Activated CD4-positive, alpha-beta memory T cell treated with anti-CD3 and anti-CD28 coated beads for 36 hours (primary cell): ENCODE measurements at regions of chr3 and their contacts with region 1.

Region 1: GRCh38 chr3:114290911-114291901 is 2.6 kb upstream of the TIGIT start:
- DNase-seq: peak; percentile 96
- H3K4me3 Mint-ChIP-seq: peak overlapping the region; percentile 75
- H3K27ac Mint-ChIP-seq: peak overlapping the region; percentile 97
- H3K4me1 Mint-ChIP-seq: peaks cover 59% of the 10 kb centered on the region
- H3K27me3 Mint-ChIP-seq: no peaks in the 10 kb centered on the region

Region 2: GRCh38 chr3:114223143-114223542 is 68.1 kb before region 1 on chr3:
- CTCF ChIA-PET with region 1: interaction called, 38 read pairs
- POLR2A ChIA-PET with region 1: interaction called, 16 read pairs
- intact Hi-C with region 1: loop called (anchors 1 kb)
- DNase-seq: no peak
- H3K4me3 Mint-ChIP-seq: no peak overlapping the region
- H3K27ac Mint-ChIP-seq: peak overlapping the region; percentile 92
- H3K4me1 Mint-ChIP-seq: peaks cover 90% of the 10 kb centered on the region
- H3K27me3 Mint-ChIP-seq: no peaks in the 10 kb centered on the region

Region 3: GRCh38 chr3:114260152-114260551 is 31.1 kb before region 1 on chr3:
- CTCF ChIA-PET with region 1: interaction called, 11 read pairs
- POLR2A ChIA-PET with region 1: no interaction called
- intact Hi-C with region 1: no loop called
- DNase-seq: no peak
- H3K4me3 Mint-ChIP-seq: no peak overlapping the region
- H3K27ac Mint-ChIP-seq: no peak overlapping the region
- H3K4me1 Mint-ChIP-seq: no peaks in the 10 kb centered on the region
- H3K27me3 Mint-ChIP-seq: no peaks in the 10 kb centered on the region

Region 4: DNA sequence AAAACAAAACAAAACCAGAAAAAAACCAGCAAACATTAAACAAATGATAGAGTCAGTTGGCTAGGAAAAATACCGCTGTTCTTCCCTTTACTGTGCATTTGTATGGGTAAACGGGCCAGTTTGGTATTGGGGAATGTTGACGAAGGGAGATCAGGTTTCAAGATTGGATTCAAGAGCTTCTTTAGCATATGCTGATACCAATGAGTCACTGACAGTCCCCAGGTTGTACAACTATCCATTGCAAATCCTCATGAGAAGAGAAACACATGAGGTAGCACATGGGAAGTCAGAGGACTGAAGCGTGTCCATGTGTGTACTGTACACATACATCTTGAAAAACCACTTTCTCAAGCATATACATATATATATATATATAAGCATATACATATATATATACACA is 28.2 kb after region 1 on chr3:
- CTCF ChIA-PET with region 1: interaction called, 28 read pairs
- POLR2A ChIA-PET with region 1: interaction called, 9 read pairs
- intact Hi-C with region 1: no loop called
- DNase-seq: no peak
- H3K4me3 Mint-ChIP-seq: no peak overlapping the region
- H3K27ac Mint-ChIP-seq: no peak overlapping the region
- H3K4me1 Mint-ChIP-seq: peaks cover 85% of the 10 kb centered on the region
- H3K27me3 Mint-ChIP-seq: no peaks in the 10 kb centered on the region

Region 5: DNA sequence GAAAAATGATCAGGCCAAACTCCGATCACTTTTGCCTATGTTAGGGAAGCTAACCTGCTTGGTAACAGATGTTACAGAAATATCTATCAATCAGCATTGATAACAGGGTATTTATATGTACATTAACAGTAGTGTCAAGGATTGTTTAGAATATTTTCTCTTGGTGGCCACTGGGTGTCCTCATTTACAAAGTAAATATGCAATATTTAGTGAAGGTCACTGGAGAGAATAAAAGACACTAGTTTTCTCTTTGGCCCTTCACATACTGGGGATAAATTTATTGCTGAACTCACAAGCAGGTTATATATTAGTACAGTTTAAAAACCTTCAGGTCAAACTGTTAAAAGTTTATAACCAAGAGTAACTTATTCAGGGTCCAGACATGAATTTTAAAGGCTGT is 71.6 kb after region 1 on chr3:
- CTCF ChIA-PET with region 1: interaction called, 16 read pairs
- POLR2A ChIA-PET with region 1: no interaction called
- intact Hi-C with region 1: loop called (anchors 2 kb)
- DNase-seq: no peak
- H3K4me3 Mint-ChIP-seq: no peak overlapping the region
- H3K27ac Mint-ChIP-seq: no peak overlapping the region
- H3K4me1 Mint-ChIP-seq: peaks cover 17% of the 10 kb centered on the region
- H3K27me3 Mint-ChIP-seq: no peaks in the 10 kb centered on the region

Region 6: GRCh38 chr3:114418724-114419543 is 127.7 kb after region 1 on chr3:
- CTCF ChIA-PET with region 1: interaction called, 75 read pairs
- POLR2A ChIA-PET with region 1: interaction called, 6 read pairs
- intact Hi-C with region 1: loop called (anchors 1 kb)
- DNase-seq: no peak
- H3K4me3 Mint-ChIP-seq: peak overlapping the region; percentile 54
- H3K27ac Mint-ChIP-seq: peak overlapping the region; percentile 61
- H3K4me1 Mint-ChIP-seq: peaks cover 28% of the 10 kb centered on the region
- H3K27me3 Mint-ChIP-seq: no peaks in the 10 kb centered on the region